Lower leg skin (tissue), 4 donors: ENCODE measurements at regions of chr15 and their contacts with region 1.

Region 1: GRCh38 chr15:83262594-83263315 is 21.7 kb downstream of the BNC1 start:
- DNase-seq: no peak
- H3K4me3 ChIP-seq: no peak overlapping the region
- CTCF ChIP-seq: no peak
- POLR2A ChIP-seq: no peak

Region 2: DNA sequence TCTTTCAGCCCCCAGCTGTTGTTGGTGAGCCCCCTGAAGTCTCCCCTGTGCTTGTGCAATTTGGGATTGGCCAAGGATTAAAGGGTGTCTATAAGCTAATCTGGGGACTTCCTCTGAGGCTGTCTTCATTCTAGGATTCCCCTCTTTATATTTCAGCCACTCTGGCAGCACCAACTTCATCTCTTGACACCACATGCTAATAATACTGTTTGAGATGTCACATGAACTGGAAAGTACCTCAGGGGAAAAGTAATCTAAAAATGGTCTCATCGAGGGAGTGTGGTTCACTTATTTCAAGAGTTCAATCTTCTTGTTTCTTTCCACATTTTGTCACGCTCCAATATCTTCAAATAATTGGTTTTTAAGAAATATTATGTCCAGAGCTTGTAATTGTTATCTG is 1609.5 kb before region 1 on chr15:
- intact Hi-C with region 1: loop called (anchors 10 kb)
- DNase-seq: no peak
- H3K4me3 ChIP-seq: no peak overlapping the region
- CTCF ChIP-seq: no peak
- POLR2A ChIP-seq: no peak

Region 3: DNA sequence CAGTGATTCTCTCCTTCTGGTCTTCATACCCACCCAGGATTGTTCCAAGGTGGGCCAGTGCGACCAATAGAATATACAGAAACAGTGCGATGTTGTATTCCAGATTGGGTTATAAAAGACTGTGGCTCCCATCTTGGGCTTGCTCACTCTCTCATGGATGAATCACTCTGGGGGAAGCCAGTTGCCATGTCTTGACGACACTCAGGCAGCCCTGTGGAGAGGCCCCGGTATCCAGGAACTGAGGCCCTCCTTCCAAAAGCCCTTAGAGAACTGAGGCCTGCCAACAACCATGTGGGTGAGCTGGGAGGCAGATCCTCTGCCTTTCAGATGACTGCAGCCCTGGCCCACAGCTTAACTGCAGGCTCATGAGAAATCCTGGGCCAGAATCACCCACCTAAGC is 241.6 kb after region 1 on chr15:
- intact Hi-C with region 1: no loop called
- DNase-seq: no peak
- H3K4me3 ChIP-seq: no peak overlapping the region
- CTCF ChIP-seq: no peak
- POLR2A ChIP-seq: no peak